HCT116 (cell line): ENCODE measurements at regions of chr4 and their contacts with region 1.

Region 1: GRCh38 chr4:98467627-98468072 is 190.8 kb downstream of the TSPAN5 start:
- DNase-seq: peak; percentile 80
- ATAC-seq: peak; percentile 92
- H3K4me3 ChIP-seq: peak overlapping the region; percentile 36 to 51
- H3K27ac ChIP-seq: no peak overlapping the region
- H3K4me1 ChIP-seq: peaks cover 0 to 18% of the 10 kb centered on the region in 2 experiments; a peak in 2 of 4 replicates
- H3K27me3 ChIP-seq: no peaks in the 10 kb centered on the region
- CTCF ChIP-seq: peak; percentile 69 to 80 (median 74); a peak in 5 of 6 replicates
- POLR2A ChIP-seq: no peak
- RAD21 ChIP-seq: peak; percentile 96

Region 2: DNA sequence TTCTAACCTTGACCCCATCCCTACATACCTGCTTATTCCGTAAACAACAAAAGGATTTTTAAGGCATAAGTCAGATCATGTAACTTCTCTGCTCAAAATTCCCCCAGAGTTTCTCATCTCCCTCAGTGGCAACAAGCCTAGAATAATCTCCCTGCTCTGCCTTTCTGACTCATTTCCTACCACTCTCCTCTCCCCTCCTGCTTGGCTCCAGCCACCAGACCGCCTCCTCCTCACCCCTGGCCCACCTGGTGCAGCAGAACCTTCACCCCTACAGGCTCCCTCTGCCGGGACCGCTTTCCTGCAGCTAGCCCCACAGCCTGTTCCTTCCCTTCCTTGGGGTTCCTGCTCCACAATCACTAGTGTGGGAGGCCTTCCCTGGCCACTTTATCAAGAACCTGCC is 158.7 kb after region 1 on chr4:
- CTCF ChIA-PET with region 1: no interaction called
- POLR2A ChIA-PET with region 1: no interaction called
- RAD21 ChIA-PET with region 1: no interaction called
- intact Hi-C with region 1: loop called (anchors 10 kb)
- DNase-seq: peak; percentile 92
- ATAC-seq: peak; percentile 86
- H3K4me3 ChIP-seq: peak overlapping the region in 1 of 2 experiments; percentile 37; a peak in 2 of 4 replicates
- H3K27ac ChIP-seq: peak overlapping the region; percentile 87
- H3K4me1 ChIP-seq: peaks cover 78 to 97% of the 10 kb centered on the region in 2 experiments
- H3K27me3 ChIP-seq: no peaks in the 10 kb centered on the region
- CTCF ChIP-seq: peak in 2 of 3 experiments; percentile 14 to 24; a peak in 1 of 6 replicates
- POLR2A ChIP-seq: no peak
- RAD21 ChIP-seq: peak; percentile 41; the same call in 1 of the 2 replicates

Region 3: GRCh38 chr4:98828801-98829200 is 361.2 kb after region 1 on chr4:
- CTCF ChIA-PET with region 1: no interaction called
- POLR2A ChIA-PET with region 1: no interaction called
- RAD21 ChIA-PET with region 1: no interaction called
- intact Hi-C with region 1: loop called (anchors 5 kb)
- DNase-seq: peak; percentile 19
- ATAC-seq: peak; percentile 91
- H3K4me3 ChIP-seq: no peak overlapping the region
- H3K27ac ChIP-seq: no peak overlapping the region
- H3K4me1 ChIP-seq: peaks cover 0 to 6% of the 10 kb centered on the region in 2 experiments; a peak in 1 of 4 replicates
- H3K27me3 ChIP-seq: no peaks in the 10 kb centered on the region
- CTCF ChIP-seq: peak; percentile 43 to 49 (median 44); a peak in 4 of 6 replicates
- POLR2A ChIP-seq: no peak
- RAD21 ChIP-seq: peak; percentile 70

Region 4: DNA sequence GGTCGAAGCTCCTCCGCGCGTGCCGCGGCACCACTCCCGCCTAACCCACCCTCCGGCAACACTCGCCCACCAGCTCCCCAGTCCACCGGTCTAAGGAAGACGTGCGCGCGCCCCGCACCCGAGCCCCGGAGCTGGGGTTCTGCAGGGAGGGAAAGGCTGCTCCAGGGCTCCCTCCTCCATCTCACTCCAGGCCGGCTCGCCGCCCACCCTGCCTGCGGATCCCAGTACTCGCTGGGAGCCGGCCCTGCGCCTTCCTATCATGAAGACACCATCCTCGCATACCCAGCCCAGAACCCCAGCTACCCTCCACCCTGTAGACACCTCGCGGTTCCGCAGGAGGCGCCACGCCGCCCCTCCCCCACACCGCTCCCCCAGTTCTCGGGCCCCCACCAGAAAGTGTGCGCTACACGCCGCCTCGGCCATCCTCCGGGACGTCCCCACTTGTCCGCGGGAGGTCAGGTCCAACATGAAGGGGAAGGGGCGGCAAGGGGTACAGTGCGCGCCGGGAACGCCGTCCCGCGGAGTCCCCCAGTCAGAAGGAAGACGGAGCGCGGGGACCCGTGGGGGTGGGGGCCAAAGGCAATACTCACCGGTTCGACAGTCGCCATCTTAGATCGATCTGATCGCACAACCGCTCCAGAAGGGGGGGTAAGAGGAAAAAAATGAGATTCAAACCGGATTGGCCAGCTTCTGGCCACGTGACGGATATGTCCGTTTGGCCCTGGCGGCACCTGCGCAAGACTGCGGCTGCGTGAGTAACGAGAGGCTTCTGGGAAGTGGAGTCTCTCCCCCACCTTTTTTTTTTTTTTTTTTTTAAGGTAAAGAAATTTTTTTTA is 461.1 kb after region 1 on chr4 and contains the start of gene EIF4E:
- CTCF ChIA-PET with region 1: no interaction called
- POLR2A ChIA-PET with region 1: no interaction called
- RAD21 ChIA-PET with region 1: no interaction called
- intact Hi-C with region 1: loop called (anchors 10 kb)
- DNase-seq: peak; percentile 99
- ATAC-seq: peak; percentile 73
- H3K4me3 ChIP-seq: peak within 1 kb of the TSS; percentile 90 to 93
- H3K27ac ChIP-seq: peak within 1 kb of the TSS; percentile 95
- H3K4me1 ChIP-seq: peaks cover 14 to 29% of the 10 kb centered on the region in 2 experiments
- H3K27me3 ChIP-seq: no peaks in the 10 kb centered on the region
- CTCF ChIP-seq: peak in 2 of 3 experiments; percentile 19 to 24; a peak in 2 of 6 replicates
- POLR2A ChIP-seq: peak; percentile 32
- RAD21 ChIP-seq: no peak
- total RNA-seq, gene EIF4E: 148 TPM

Region 5: DNA sequence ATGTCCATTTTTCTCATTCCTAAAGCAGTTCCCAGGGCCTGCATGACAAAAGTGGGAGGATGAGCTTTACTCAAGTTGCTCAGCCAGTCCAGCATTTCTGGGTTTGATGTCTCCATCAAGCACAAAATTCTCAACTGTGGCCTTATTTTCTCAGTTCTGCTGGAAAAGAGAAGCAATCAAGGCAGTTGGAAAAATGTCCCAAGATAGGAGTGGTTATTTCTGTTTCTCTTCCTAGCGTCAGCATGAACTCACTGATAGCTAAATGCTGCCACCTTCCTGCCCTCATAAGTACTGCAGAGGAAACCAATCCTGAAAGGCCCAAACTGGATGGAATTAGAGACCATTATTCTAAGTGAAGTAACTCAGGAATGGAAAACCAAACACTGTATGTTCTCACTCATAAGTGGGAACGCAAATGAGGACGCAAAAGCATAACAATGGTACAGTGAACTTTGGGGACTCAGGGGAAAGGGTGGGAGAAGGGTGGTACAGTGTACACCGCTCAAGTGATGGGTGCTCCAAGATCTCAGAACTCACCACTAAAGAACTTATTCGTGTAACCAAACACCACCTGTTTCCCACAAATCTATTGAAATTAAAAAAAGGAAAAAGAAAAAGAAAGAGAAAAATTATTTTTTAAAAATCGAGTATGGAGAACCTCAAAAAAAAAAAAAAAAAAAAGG is 937.9 kb after region 1 on chr4:
- CTCF ChIA-PET with region 1: no interaction called
- POLR2A ChIA-PET with region 1: no interaction called
- RAD21 ChIA-PET with region 1: no interaction called
- intact Hi-C with region 1: loop called (anchors 5 kb)
- DNase-seq: peak; percentile 60
- ATAC-seq: peak; percentile 88
- H3K4me3 ChIP-seq: no peak overlapping the region
- H3K27ac ChIP-seq: no peak overlapping the region
- H3K4me1 ChIP-seq: peaks cover 0 to 9% of the 10 kb centered on the region in 2 experiments; a peak in 1 of 4 replicates
- H3K27me3 ChIP-seq: no peaks in the 10 kb centered on the region
- CTCF ChIP-seq: peak; percentile 79 to 88 (median 86); a peak in 5 of 6 replicates
- POLR2A ChIP-seq: no peak
- RAD21 ChIP-seq: peak; percentile 94

Region 6: DNA sequence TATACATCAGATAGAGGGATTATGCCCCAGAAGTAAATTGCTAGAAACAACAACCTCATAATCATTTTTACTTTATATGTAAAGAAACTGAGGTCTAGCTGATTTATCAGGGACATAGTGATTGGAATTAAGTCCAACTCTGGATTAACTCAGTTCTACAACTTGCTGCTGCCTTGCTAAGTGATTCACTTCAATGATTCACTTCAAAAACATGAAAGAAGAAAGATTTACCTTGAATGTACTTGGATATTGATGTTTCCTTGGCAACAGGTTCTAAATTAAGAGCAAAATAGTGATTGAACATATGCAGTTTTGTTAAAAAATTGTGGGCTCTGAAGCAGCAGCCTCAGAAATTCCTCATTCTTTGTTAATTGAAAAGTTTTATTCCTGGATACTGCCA is 1582.2 kb after region 1 on chr4:
- CTCF ChIA-PET with region 1: no interaction called
- POLR2A ChIA-PET with region 1: no interaction called
- RAD21 ChIA-PET with region 1: no interaction called
- intact Hi-C with region 1: no loop called
- DNase-seq: no peak
- ATAC-seq: no peak
- H3K4me3 ChIP-seq: no peak overlapping the region
- H3K27ac ChIP-seq: no peak overlapping the region
- H3K4me1 ChIP-seq: no peaks in the 10 kb centered on the region
- H3K27me3 ChIP-seq: no peaks in the 10 kb centered on the region
- CTCF ChIP-seq: no peak
- POLR2A ChIP-seq: no peak
- RAD21 ChIP-seq: no peak